Heart left ventricle (tissue), 16 donors: ENCODE measurements at regions of chr13 and their contacts with region 1.

Region 1: GRCh38 chr13:113629866-113630265 is 28.1 kb downstream of the ATP4B start:
- DNase-seq: peak in 1 of 5 donors; percentile 3
- ATAC-seq: no peak
- H3K4me3 ChIP-seq: no peak overlapping the region
- H3K27ac ChIP-seq: no peak overlapping the region
- H3K4me1 ChIP-seq: no peaks in the 10 kb centered on the region
- H3K27me3 ChIP-seq: no peaks in the 10 kb centered on the region
- CTCF ChIP-seq: no peak
- POLR2A ChIP-seq: no peak

Region 2: DNA sequence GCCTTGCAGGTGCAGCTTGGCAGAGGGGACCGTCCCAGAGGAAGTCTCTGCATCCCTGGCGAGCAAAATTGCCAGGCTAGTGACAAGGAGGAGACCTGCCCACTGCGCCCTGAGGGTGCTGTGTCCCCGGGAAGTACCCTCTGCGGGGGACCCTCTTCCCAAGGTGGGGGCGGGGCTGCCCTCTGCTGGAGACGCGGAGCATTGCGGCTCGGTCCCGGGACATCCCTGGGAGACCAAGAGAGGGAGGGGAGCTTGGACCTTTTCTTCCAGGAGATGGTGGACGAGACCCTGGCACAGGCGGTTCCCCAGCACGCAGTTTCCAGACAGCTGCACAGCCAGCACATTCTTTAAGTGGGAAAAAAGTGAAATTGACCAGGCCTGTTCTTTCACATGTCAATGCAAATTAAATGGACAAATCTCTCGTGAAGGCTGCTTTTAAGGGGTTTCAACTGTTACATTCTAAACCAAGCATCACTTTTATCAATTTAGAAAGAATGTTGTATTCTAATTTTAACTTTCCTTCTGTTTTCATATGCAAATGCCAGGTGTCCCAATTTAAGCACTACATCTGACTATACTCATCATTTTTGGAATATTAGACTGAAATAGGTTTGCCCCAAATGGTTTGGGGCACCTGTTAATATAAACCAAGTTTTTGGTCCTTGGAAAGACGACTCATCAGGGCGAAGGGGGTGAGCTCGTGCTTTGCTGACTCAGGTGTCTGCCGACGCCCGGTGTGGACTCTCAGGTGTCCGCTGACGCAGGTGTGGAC is 600.2 kb before region 1 on chr13:
- intact Hi-C with region 1: no loop called
- DNase-seq: no peak
- ATAC-seq: peak in 2 of 4 donors; percentile 27 to 60
- H3K4me3 ChIP-seq: no peak overlapping the region
- H3K27ac ChIP-seq: no peak overlapping the region
- H3K4me1 ChIP-seq: peaks cover 0 to 10% (median under 1%) of the 10 kb centered on the region in 12 donors
- H3K27me3 ChIP-seq: peaks cover 0 to 5% (median 0%) of the 10 kb centered on the region in 9 donors
- CTCF ChIP-seq: peak; percentile 61 to 87 (median 76)
- POLR2A ChIP-seq: no peak

Region 3: DNA sequence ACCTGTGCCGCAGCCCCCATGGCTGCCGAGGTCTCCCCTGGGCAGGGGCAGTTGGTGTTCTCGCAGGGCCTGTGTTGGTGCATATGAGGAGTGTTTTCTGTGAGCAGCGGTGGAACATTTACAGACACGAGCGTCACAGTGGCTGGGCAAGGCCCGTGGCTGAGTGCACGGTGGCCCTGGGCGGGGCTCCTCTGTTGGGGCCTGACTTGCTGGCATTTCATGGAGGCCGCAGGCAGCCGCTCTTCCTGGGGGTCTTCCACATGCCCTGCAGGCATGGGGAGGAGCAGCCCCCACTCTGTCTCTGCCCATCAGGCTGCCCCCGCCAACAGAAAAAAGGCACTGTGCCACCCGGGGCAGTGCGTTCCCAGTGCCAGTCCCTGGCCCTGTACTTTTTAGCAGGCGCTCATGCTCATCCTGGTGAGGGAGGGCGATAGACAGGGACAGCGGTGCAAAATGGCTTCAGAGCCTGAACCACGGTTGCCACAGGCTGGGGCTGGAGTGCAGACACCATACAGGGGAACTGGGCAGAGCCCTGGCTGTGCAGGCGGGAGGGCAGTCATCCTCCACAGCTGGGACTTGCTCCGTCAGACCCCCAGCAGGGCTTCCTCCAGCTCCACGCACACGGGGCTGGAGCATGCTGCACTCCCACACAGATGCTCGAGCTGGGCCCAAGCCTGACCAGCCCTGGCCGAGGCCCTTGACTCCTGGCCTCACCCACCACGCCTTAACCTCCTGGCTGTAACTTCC is 21.8 kb before region 1 on chr13:
- intact Hi-C with region 1: loop called in 1 of 10 experiments (anchors 2 kb)
- DNase-seq: peak in 1 of 5 donors; percentile 57
- ATAC-seq: peak in 3 of 4 donors; percentile 3 to 12 (median 11)
- H3K4me3 ChIP-seq: no peak overlapping the region
- H3K27ac ChIP-seq: peak overlapping the region in 1 of 12 donors; percentile 23
- H3K4me1 ChIP-seq: peaks cover 0 to 7% (median 0%) of the 10 kb centered on the region in 12 donors
- H3K27me3 ChIP-seq: no peaks in the 10 kb centered on the region
- CTCF ChIP-seq: no peak
- POLR2A ChIP-seq: no peak